ENCODE measurements at regions of chr10 and their contacts with region 1.

Region 1: GRCh38 chr10:60099998-60100747 is 193.8 kb upstream of the CCDC6 start:
- DNase-seq: no peak
- H3K4me3 ChIP-seq: no peak overlapping the region
- CTCF ChIP-seq: no peak
- POLR2A ChIP-seq: no peak

Region 2: GRCh38 chr10:60358282-60358681 is 258.1 kb after region 1 on chr10:
- intact Hi-C with region 1: no loop called
- DNase-seq: no peak
- H3K4me3 ChIP-seq: no peak overlapping the region
- CTCF ChIP-seq: no peak
- POLR2A ChIP-seq: no peak

Region 3: DNA sequence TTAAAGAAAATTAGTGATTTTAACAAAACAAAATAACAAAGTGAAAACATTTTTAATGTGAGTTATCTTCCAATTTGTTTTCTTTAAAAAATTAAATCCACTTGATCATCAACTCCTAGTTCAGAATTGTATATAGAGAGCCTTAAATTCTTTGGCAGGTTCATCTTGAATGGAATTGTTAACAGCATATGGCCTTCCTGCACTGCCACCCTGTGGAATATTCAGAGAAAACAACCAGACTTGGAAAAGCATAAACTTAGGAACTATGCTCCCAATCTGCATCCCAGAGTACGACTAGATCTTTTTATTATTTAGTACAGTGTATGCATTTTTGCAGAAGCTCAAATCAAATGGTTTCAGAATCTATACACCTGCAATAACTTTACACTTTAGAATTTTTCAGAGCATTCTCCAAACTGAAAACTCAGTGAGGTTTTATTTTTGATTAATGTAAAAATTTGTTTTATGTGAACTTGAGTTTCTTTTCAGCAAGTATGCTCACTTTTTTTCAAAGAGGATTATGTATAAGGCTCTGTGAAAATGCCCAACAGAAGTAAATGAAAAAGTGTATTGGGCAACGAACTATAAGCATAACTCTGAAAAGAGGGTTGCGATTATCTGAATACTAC is 334.4 kb after region 1 on chr10:
- intact Hi-C with region 1: loop called (anchors 10 kb)
- DNase-seq: peak in 1 of 2 donors; percentile 27
- H3K4me3 ChIP-seq: no peak overlapping the region
- CTCF ChIP-seq: no peak
- POLR2A ChIP-seq: no peak